Vagina (tissue), 2 donors: ENCODE measurements at regions of chr9 and their contacts with region 1.

Region 1: GRCh38 chr9:82606492-82607382 is 456.2 kb downstream of the RASEF start:
- DNase-seq: no peak
- H3K4me3 ChIP-seq: no peak overlapping the region
- H3K27ac ChIP-seq: no peak overlapping the region
- H3K4me1 ChIP-seq: peaks cover 3% of the 10 kb centered on the region
- H3K27me3 ChIP-seq: no peaks in the 10 kb centered on the region
- CTCF ChIP-seq: peak in 2 of 3 experiments; percentile 29 to 42
- POLR2A ChIP-seq: no peak

Region 2: DNA sequence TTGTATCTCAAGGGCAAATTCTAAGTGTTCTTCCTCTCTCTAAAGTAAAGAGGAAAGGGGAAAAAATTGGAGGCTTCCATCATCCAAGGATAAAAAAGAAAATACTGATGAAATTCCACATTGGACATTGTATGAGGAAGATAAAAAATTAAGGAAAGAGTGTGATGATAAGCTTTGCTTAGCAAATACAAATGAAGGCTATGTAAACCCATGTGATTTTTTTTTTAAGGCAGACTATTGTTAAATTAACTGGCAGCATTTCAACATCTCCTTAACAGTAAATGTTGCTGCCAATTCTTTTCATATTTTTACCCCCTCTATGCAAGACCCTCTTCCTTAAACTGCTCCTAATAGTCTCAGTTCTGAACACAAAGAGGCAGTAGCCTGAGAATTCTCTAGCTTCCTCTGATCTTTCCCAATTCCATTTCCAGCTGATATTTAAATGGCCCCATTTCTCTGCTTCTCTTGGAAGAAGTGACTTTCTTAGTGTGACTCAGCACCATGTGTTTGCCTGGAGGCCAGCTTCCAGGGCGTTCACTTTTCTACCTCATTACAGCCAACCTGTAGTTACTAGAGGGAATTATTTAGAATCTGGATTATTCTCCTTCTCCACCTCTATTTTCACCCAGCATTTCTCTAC is 1077.1 kb before region 1 on chr9:
- intact Hi-C with region 1: loop called (anchors 10 kb)
- DNase-seq: no peak
- H3K4me3 ChIP-seq: no peak overlapping the region
- H3K27ac ChIP-seq: no peak overlapping the region
- H3K4me1 ChIP-seq: no peaks in the 10 kb centered on the region
- H3K27me3 ChIP-seq: no peaks in the 10 kb centered on the region
- CTCF ChIP-seq: no peak
- POLR2A ChIP-seq: no peak